OCI-LY7 (cell line): ENCODE measurements at regions of chr10 and their contacts with region 1.

Region 1: DNA sequence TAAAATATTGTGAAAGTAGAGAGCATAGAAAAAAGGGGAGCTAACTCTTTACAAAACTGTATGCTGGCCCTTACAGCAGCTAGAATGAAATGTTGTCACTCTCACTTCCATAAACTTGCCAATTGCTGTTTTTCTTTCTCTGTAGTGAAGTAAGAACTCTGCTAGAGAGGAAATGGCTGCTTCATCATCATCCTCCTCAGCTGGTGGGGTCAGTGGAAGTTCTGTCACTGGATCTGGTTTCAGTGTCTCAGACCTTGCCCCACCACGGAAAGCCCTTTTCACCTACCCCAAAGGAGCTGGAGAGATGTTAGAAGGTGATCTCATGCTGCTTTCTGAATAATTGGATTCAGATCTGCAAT is 7.6 kb upstream of the ASCC1 start:
- DNase-seq: no peak
- H3K4me3 ChIP-seq: no peak overlapping the region
- H3K27ac ChIP-seq: no peak overlapping the region
- H3K4me1 ChIP-seq: peaks cover 43% of the 10 kb centered on the region
- CTCF ChIP-seq: no peak

Region 2: DNA sequence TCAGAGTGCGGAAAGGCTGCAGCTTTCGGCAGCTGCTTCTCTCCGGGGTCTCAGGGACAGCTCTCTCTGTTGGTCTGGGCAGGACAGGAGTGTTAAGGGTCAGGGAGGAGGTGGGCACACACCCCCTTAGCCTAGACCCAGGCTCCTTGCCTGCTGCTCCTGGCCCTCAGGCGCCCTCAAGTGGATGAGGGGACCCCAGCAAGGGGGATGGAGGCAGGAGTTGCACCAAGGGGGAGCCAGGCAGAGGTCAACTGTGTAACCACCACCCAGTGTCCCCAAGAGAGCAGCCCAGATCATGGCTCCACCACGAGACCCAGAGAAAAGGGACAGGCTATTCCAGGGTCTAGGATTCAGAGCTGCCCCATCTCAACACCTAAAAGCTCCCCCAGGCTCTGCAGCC is 162.2 kb before region 1 on chr10:
- CTCF ChIA-PET with region 1: no interaction called
- POLR2A ChIA-PET with region 1: no interaction called
- intact Hi-C with region 1: loop called (anchors 5 kb)
- DNase-seq: peak; percentile 45
- H3K4me3 ChIP-seq: no peak overlapping the region
- H3K27ac ChIP-seq: no peak overlapping the region
- H3K4me1 ChIP-seq: no peaks in the 10 kb centered on the region
- CTCF ChIP-seq: peak; percentile 72